Right ventricle myocardium inferior (tissue), 1 donor: ENCODE measurements at regions of chr19 and their contacts with region 1.

Region 1: DNA sequence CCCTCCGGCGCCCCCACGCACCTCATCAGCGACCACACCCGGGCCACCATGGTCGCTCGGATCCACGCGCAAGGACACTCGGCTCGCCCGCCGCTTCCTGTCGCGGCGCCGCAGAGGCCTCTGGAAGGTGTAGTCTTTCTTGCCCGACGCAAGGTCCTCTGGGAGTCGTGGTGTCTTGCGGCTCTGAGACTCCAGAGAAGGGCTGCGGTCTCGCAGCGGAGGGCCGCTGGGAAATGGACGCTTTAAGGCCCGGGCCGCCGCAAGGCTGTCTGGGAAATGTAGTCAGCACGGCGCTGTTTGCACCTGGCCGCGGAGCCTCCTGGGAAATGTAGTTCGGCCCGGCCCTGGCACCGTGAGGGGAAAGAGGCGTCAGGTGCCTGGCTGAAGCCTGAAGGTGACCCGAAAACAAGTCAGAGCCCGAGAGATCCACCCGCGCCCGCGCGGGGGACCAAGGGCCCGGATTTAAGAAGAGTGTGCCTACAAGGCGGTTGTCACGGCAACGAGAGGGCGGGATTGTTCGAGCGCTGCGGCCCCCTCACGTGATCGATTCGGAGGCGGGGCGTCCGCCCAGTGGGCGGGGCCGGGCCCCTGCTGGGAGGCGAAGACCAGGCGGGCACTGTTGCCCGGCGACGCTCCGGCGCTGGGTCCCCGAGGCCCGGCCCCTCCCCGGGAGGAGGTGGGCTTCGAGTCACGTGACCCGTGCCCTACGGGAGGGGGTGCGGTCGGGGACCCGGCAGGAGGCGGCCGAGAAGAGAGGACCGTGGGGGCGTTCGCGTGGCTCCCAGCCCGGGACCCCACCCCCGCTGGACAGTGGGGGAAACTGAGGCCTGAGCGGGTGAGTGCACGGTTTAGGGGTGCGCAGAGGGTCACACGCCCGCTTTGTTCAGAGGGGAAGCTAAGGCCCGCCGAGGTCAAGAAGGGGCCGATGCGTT is at the starts of genes HSD11B1L and MICOS13:
- DNase-seq: peak; percentile 100
- ATAC-seq: peak; percentile 94
- total RNA-seq, gene HSD11B1L: 3.9 TPM
- total RNA-seq, gene MICOS13: 172 TPM

Region 2: GRCh38 chr19:5622463-5623396 is 58.0 kb before region 1 on chr19 and contains the starts of genes SAFB and SAFB2:
- intact Hi-C with region 1: loop called (anchors 2 kb)
- DNase-seq: peak; percentile 100
- ATAC-seq: peak; percentile 97
- total RNA-seq, gene SAFB: 59.8 TPM
- total RNA-seq, gene SAFB2: 43.7 TPM

Region 3: DNA sequence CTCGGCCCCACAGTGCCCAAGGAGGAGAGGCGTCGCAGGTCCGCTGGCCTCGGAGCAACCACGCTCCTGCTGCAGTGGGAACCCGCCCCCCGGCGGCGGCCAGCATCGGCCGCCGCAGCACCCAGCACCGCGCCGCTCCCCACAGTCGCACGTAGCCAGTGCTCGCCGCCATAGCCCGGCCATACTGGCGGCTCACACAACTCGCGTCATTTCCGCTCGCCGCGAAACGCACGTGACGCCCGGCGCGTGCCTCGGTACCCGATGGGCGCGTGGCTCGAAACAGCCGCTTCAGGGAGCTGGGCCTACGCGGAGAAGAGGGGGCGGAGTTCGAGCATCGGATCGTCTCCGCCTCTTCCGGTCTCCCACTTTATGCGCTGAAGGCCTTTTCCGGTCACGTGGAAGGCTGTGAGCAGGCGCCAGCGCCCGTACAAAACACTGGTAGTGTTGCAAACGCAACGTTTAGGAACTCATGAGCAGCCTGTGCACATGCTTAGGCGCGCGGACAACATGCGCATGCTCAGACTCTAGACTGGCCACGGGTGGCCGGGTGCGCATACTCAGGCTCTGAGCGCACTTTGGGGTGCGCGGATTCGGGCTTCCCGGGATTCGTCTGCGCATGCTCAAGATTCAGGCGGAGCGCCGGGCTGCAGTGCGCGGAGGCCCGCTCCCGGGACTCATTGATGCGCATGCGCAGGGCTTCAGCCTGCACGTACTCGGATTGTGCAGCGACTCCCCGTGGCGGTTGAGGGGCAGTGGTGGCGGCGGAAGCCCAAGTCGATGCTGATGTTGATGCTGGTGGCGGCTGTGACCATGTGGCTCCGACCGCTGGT is 39.5 kb after region 1 on chr19 and contains the starts of genes CATSPERD and LONP1:
- intact Hi-C with region 1: loop called (anchors 5 kb)
- DNase-seq: peak; percentile 99
- ATAC-seq: peak; percentile 99
- total RNA-seq, gene CATSPERD: not detected
- total RNA-seq, gene LONP1: 98.1 TPM

Region 4: DNA sequence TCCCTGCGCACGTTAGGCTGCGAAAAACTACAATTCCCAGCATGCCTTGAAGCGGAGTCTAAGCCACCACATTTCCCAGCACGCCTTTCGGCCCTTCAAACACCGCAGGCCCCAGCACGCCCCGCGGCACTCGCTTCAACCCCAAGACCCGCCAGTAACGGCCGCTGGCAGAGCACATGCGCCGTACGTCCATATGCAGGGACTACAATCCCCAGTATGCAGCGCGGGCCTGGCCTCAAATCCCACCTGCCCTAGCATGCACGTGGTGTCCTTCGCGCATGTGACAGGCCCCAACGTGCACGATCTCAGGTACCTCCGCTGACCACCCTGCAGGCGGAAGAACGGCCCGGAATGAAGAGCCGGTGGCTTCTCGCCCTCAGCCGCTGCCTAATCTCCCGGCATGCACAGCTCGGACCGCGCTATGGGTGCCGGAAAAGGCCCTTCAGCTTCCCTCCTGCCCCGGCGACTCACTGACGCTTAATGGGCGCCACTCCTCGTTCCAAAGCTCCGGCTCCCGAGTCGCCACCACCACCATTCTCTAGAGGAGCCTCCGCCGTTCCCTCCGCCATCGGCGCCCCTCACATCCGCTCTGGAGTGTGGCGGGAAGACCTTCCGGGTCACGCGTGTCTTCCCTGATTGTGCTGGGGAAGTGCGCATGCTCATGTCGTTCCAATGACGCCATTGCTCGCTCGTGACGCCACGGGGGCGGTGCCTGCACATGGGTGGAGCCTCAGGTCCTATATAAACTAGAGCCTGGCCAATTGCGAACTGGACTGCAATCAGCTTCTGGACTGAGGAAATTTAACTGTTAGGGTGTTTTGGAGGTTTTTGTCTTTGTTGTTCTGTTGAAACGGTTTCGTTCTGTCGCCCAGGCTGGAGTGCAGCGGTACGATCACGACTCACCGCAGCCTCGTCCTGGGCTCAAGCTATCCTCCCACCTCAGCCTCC is 110.1 kb after region 1 on chr19 and contains the start of gene DUS3L:
- intact Hi-C with region 1: loop called (anchors 2 kb)
- DNase-seq: peak; percentile 98
- ATAC-seq: peak; percentile 98
- total RNA-seq, gene DUS3L: 11.8 TPM